ENCODE measurements at regions of chr15 and their contacts with region 1.

Region 1: DNA sequence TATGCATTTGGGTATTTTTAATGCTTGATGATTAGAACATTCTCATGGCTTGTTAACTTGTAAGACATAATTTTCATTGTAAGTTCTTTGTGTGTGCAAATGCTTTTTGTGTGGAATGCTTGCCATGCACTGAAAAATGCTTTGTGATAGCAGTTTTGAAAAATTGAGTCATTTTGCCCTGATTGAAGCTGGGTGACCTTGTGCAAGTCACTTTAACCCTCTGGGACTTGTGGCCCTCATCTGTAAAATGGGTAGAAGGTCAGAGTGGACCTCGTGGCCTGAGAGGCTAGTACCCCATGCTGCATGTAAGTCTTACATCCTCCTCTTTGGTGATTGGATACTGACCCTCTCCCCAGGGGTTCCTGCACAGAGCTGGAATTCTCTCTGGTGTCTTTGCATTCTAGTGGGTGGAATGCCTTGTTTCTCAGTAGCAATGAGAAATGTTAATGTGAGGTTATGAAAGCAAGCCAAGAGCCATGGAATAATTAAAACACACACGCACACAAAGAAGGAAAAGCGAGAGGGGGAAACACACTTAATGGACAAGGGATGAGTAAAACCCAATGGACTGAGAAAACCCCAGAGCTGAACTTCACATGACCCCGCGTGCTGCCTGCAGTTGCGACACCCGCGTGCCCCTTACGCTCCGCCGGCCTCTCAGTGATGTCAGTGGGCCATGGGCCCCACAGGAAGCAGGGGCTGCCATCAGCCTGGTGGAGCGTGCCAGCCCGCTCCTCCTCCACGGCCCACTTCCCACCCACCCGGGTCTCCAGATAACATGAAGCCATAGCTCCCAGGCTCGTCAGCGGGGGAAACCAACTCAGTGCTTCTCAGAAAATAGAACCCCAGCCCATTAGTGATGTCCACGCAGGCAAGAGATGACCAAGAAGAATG is 44.0 kb downstream of the SMAD3 start:
- DNase-seq: no peak
- ATAC-seq: peak; percentile 14
- H3K4me3 ChIP-seq: no peak overlapping the region
- H3K27ac ChIP-seq: peak overlapping the region; percentile 100
- H3K4me1 ChIP-seq: peaks cover 85% of the 10 kb centered on the region
- H3K27me3 ChIP-seq: no peaks in the 10 kb centered on the region
- CTCF ChIP-seq: no peak

Region 2: GRCh38 chr15:66830358-66830757 is 279.0 kb before region 1 on chr15:
- CTCF ChIA-PET with region 1: no interaction called
- POLR2A ChIA-PET with region 1: no interaction called
- in situ Hi-C with region 1: no loop called
- intact Hi-C with region 1: no loop called
- DNase-seq: no peak
- ATAC-seq: peak; percentile 83
- H3K4me3 ChIP-seq: no peak overlapping the region
- H3K27ac ChIP-seq: peak overlapping the region; percentile 64
- H3K4me1 ChIP-seq: peaks cover 9% of the 10 kb centered on the region
- H3K27me3 ChIP-seq: no peaks in the 10 kb centered on the region
- CTCF ChIP-seq: no peak

Region 3: GRCh38 chr15:67130673-67131601 is 21.5 kb after region 1 on chr15:
- CTCF ChIA-PET with region 1: no interaction called
- POLR2A ChIA-PET with region 1: interaction called, 13 read pairs
- in situ Hi-C with region 1: no loop called
- intact Hi-C with region 1: no loop called
- DNase-seq: no peak
- ATAC-seq: no peak
- H3K4me3 ChIP-seq: no peak overlapping the region
- H3K27ac ChIP-seq: peak overlapping the region; percentile 100
- H3K4me1 ChIP-seq: peaks cover 100% of the 10 kb centered on the region
- H3K27me3 ChIP-seq: no peaks in the 10 kb centered on the region
- CTCF ChIP-seq: no peak

Region 4: GRCh38 chr15:67210555-67211168 is 101.3 kb after region 1 on chr15:
- CTCF ChIA-PET with region 1: no interaction called
- POLR2A ChIA-PET with region 1: no interaction called
- in situ Hi-C with region 1: no loop called
- intact Hi-C with region 1: no loop called
- DNase-seq: no peak
- ATAC-seq: 0 out of 2 replicates have a peak, but pooled peaks have one; percentile 26
- H3K4me3 ChIP-seq: no peak overlapping the region
- H3K27ac ChIP-seq: no peak overlapping the region
- H3K4me1 ChIP-seq: no peaks in the 10 kb centered on the region
- H3K27me3 ChIP-seq: no peaks in the 10 kb centered on the region
- CTCF ChIP-seq: no peak

Region 5: GRCh38 chr15:67244971-67245478 is 135.6 kb after region 1 on chr15:
- CTCF ChIA-PET with region 1: no interaction called
- POLR2A ChIA-PET with region 1: no interaction called
- in situ Hi-C with region 1: no loop called
- intact Hi-C with region 1: no loop called
- DNase-seq: no peak
- ATAC-seq: no peak
- H3K4me3 ChIP-seq: no peak overlapping the region
- H3K27ac ChIP-seq: no peak overlapping the region
- H3K4me1 ChIP-seq: peaks cover 28% of the 10 kb centered on the region
- H3K27me3 ChIP-seq: no peaks in the 10 kb centered on the region
- CTCF ChIP-seq: no peak

Measured in Panc1 (cell line).